ENCODE measurements at regions of chr15 and their contacts with region 1.

Region 1: GRCh38 chr15:83092309-83092976 is 15.0 kb upstream of the TM6SF1 start:
- DNase-seq: peak; percentile 52 to 96 (median 74)
- ATAC-seq: peak; percentile 98
- H3K4me3 ChIP-seq: no peak overlapping the region
- H3K27ac ChIP-seq: peak overlapping the region; percentile 87
- H3K4me1 ChIP-seq: peaks cover 6 to 23% of the 10 kb centered on the region in 2 experiments; a peak in 4 of 5 replicates
- H3K27me3 ChIP-seq: no peaks in the 10 kb centered on the region
- CTCF ChIP-seq: no peak
- EP300 ChIP-seq: peak; percentile 96
- POLR2A ChIP-seq: peak; percentile 68
- RAD21 ChIP-seq: peak in 1 of 2 experiments; percentile 19; a peak in 2 of 4 replicates

Region 2: DNA sequence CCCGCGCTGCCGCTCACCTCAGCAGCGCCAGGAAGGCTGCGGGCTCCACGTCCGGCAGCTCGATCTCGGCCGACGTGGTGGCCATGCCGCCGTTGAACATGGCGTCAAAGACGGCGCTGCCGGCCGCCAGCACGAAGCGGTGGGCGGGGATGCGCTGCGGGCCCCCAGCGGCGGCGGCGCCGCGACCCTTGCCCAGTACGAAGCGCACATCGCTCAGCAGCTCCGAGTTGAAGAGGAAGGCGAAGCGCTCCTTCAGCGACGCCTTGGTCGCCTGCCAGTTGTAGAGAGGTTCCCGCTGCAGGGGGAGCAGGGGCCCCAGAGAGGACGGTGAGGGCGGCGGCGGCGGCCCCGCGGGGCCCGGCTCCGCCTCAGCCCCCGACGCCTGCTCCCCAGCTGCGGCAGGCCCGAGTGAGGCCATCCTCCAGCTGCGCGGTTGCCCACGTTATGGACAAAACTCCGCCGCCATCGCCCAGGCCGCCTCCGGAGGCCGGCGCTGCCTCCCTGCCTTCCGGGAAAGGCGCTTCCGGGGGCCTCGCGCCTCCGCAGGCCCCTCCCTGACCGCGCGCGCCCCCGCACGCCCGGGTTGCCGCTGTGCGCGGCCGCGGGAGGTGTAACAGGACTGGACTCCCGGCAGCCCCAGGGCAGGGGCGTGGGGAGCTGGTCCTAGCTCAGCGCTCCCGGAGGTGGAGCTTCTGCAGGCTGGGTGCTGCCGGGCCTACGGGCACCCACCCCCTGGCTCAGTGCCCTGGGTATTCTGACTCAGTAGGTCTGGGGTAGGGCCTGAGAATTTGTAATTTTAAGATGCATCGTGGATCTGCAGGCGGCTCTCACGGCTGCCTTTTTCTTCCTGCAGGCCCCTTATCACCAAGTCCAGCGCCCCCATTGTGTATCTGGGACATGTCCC is 25.5 kb before region 1 on chr15 and contains the start of gene BTBD1:
- CTCF ChIA-PET with region 1: no interaction called
- POLR2A ChIA-PET with region 1: interaction called, 6 read pairs
- in situ Hi-C with region 1: no loop called
- intact Hi-C with region 1: loop called (anchors 2 kb)
- DNase-seq: peak; percentile 94 to 97 (median 96)
- ATAC-seq: peak; percentile 95
- H3K4me3 ChIP-seq: peak within 1 kb of the TSS; percentile 90
- H3K27ac ChIP-seq: peak within 1 kb of the TSS; percentile 92
- H3K4me1 ChIP-seq: peaks cover 9 to 29% of the 10 kb centered on the region in 2 experiments
- H3K27me3 ChIP-seq: no peaks in the 10 kb centered on the region
- CTCF ChIP-seq: peak in 2 of 3 experiments; percentile 10 to 33; a peak in 3 of 6 replicates
- EP300 ChIP-seq: no peak
- POLR2A ChIP-seq: peak; percentile 94
- RAD21 ChIP-seq: no peak; a peak in 2 of 4 replicates
- polyA plus RNA-seq, gene BTBD1: 19.4 to 27.2 TPM